ENCODE measurements at regions of chr6 and their contacts with region 1.

Region 1: DNA sequence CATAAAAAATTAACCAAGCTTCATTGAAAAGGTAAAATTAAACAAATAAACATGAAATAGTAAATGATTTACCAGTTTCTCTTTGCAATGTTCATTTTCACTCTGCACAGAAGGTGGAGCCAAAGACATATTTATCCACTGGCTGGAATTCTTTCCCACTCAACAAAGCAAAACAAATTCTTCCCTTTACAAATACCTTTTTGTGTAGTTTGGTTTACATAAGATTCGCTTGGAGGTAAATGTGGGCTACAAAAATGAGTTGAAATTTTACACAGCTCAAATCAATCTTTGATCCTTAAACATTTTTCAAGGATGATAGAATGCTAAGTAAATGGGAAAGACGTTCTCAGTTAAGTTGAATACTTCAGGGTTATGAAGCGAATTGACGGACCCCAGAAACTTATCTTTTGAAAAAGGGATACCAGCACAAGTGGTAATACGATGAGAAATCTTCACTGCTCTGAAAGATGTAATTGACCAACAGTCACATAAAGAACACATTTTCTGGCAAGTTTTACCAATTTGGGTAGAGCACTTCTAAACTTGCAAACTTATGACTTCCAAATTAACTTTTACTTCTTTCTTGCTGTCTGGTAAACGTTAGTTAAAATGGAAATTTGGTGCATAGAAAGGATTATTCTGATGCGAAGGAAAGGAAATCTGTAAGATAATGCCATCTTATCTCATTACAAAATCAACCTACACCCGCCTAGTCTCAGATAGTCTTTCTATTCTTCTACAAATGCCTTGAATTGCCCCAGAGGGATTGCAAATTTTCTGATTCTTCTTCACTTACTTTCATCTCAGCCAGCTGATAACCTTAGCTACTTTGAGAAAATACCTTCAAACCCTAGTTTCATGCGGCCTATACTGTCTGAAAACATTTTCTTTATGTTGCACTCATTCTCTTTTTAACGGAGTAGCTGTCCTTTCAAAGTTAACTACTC is 4.7 kb upstream of the GJA1 start:
- DNase-seq: peak in 1 of 2 experiments; percentile 47
- H3K4me3 ChIP-seq: no peak overlapping the region
- H3K4me3 Mint-ChIP-seq: peak overlapping the region; percentile 9
- H3K27ac Mint-ChIP-seq: no peak overlapping the region
- H3K4me1 ChIP-seq: peaks cover 18% of the 10 kb centered on the region
- H3K4me1 Mint-ChIP-seq: peaks cover 7% of the 10 kb centered on the region
- H3K27me3 ChIP-seq: no peaks in the 10 kb centered on the region
- H3K27me3 Mint-ChIP-seq: no peaks in the 10 kb centered on the region
- CTCF ChIP-seq: peak; percentile 47 to 69

Region 2: DNA sequence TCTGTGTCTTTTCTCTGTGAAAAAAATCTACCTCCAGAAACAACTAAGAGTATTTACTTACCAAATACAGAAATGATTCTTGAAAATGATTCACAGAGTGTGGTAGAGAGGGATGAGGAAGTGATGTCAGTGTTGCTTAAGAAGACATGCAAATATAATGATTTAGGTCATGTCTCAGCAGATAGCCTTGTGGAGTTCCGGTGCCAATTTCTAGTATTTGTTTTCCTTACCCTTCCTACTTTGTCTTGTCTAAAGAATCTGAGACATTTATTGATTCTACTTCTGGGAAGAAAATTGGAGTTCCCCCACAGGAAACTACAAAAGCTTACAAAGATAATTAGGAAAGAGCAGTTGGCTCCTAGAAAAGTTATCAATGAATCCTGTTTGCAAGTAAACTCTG is 73.4 kb after region 1 on chr6:
- CTCF ChIA-PET with region 1: no interaction called
- POLR2A ChIA-PET with region 1: no interaction called
- intact Hi-C with region 1: no loop called
- DNase-seq: peak in 1 of 2 experiments; percentile 8
- H3K4me3 ChIP-seq: no peak overlapping the region
- H3K4me3 Mint-ChIP-seq: no peak overlapping the region
- H3K27ac Mint-ChIP-seq: peak overlapping the region; percentile 76
- H3K4me1 ChIP-seq: peaks cover 8% of the 10 kb centered on the region
- H3K4me1 Mint-ChIP-seq: peaks cover 20% of the 10 kb centered on the region
- H3K27me3 ChIP-seq: no peaks in the 10 kb centered on the region
- H3K27me3 Mint-ChIP-seq: no peaks in the 10 kb centered on the region
- CTCF ChIP-seq: no peak

Region 3: GRCh38 chr6:121573481-121573880 is 142.7 kb after region 1 on chr6:
- CTCF ChIA-PET with region 1: interaction called, 3 read pairs
- POLR2A ChIA-PET with region 1: no interaction called
- intact Hi-C with region 1: loop called (anchors 1 kb)
- DNase-seq: no peak
- H3K4me3 ChIP-seq: no peak overlapping the region
- H3K4me3 Mint-ChIP-seq: no peak overlapping the region
- H3K27ac Mint-ChIP-seq: peak overlapping the region; percentile 13
- H3K4me1 ChIP-seq: peaks cover 46% of the 10 kb centered on the region
- H3K4me1 Mint-ChIP-seq: peaks cover 20% of the 10 kb centered on the region
- H3K27me3 ChIP-seq: no peaks in the 10 kb centered on the region
- H3K27me3 Mint-ChIP-seq: no peaks in the 10 kb centered on the region
- CTCF ChIP-seq: no peak

Region 4: GRCh38 chr6:121691126-121691551 is 260.4 kb after region 1 on chr6:
- CTCF ChIA-PET with region 1: no interaction called
- POLR2A ChIA-PET with region 1: no interaction called
- intact Hi-C with region 1: loop called (anchors 2 kb)
- DNase-seq: peak in 1 of 2 experiments; percentile 35
- H3K4me3 ChIP-seq: no peak overlapping the region
- H3K4me3 Mint-ChIP-seq: peak overlapping the region; percentile 30
- H3K27ac Mint-ChIP-seq: peak overlapping the region; percentile 79
- H3K4me1 ChIP-seq: peaks cover 41% of the 10 kb centered on the region
- H3K4me1 Mint-ChIP-seq: peaks cover 38% of the 10 kb centered on the region
- H3K27me3 ChIP-seq: no peaks in the 10 kb centered on the region
- H3K27me3 Mint-ChIP-seq: no peaks in the 10 kb centered on the region
- CTCF ChIP-seq: no peak

Region 5: DNA sequence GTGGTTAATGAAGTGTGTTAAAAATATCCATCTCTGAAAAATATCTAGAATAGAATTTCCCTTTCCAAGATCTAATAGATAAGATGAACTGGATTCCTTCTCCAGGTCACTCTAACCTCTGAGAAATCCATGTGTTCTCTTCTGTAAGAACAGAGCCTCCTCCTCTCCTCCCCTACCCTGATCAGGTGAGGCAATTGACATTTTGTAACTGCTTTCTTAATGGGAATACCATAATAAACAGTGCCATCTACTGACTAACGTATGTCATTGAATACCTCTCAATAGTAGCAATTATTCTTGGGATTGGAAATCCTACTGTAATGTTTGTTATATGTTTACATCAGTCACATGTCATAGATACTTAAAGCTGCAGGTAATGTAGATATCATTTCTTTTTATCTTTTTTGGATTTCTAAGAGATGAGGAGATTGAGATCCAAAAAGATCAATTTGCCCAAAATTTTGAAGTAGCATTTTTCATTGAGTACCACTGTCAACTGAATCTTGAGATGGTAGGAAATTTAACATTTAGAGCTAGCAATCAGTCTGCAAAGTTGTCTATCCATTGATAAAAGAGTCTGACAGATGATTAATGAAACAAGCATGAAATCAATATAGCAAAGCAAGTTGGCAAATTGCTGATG is 602.9 kb after region 1 on chr6:
- CTCF ChIA-PET with region 1: no interaction called
- POLR2A ChIA-PET with region 1: no interaction called
- intact Hi-C with region 1: loop called (anchors 1 kb)
- DNase-seq: peak in 1 of 2 experiments; percentile 51
- H3K4me3 ChIP-seq: no peak overlapping the region
- H3K4me3 Mint-ChIP-seq: no peak overlapping the region
- H3K27ac Mint-ChIP-seq: no peak overlapping the region
- H3K4me1 ChIP-seq: peaks cover 13% of the 10 kb centered on the region
- H3K4me1 Mint-ChIP-seq: peaks cover 24% of the 10 kb centered on the region
- H3K27me3 ChIP-seq: no peaks in the 10 kb centered on the region
- H3K27me3 Mint-ChIP-seq: no peaks in the 10 kb centered on the region
- CTCF ChIP-seq: peak in 1 of 2 experiments; percentile 32

Region 6: GRCh38 chr6:122289762-122290539 is 859.2 kb after region 1 on chr6:
- CTCF ChIA-PET with region 1: no interaction called
- POLR2A ChIA-PET with region 1: no interaction called
- intact Hi-C with region 1: loop called (anchors 2 kb)
- DNase-seq: no peak
- H3K4me3 ChIP-seq: no peak overlapping the region
- H3K4me3 Mint-ChIP-seq: no peak overlapping the region
- H3K27ac Mint-ChIP-seq: no peak overlapping the region
- H3K4me1 ChIP-seq: no peaks in the 10 kb centered on the region
- H3K4me1 Mint-ChIP-seq: no peaks in the 10 kb centered on the region
- H3K27me3 ChIP-seq: no peaks in the 10 kb centered on the region
- H3K27me3 Mint-ChIP-seq: peaks cover 8% of the 10 kb centered on the region
- CTCF ChIP-seq: no peak

Measured in Caco-2 (cell line).